Activated naive CD4-positive, alpha-beta T cell treated with anti-CD3 and anti-CD28 coated beads for 36 hours (primary cell): ENCODE measurements at regions of chr11 and their contacts with region 1.

Region 1: GRCh38 chr11:58524232-58525036 is 16.5 kb upstream of the OR5B21 start:
- DNase-seq: peak; percentile 67
- H3K4me3 Mint-ChIP-seq: peak overlapping the region; percentile 61
- H3K27ac Mint-ChIP-seq: peak overlapping the region; percentile 86
- H3K4me1 Mint-ChIP-seq: peaks cover 52% of the 10 kb centered on the region
- H3K27me3 Mint-ChIP-seq: no peaks in the 10 kb centered on the region

Region 2: GRCh38 chr11:57667736-57668435 is 856.5 kb before region 1 on chr11 and contains the start of gene ZDHHC5:
- CTCF ChIA-PET with region 1: interaction called, 4 read pairs
- intact Hi-C with region 1: loop called (anchors 1 kb)
- DNase-seq: peak; percentile 99
- H3K4me3 Mint-ChIP-seq: peak within 1 kb of the TSS; percentile 91
- H3K27ac Mint-ChIP-seq: peak within 1 kb of the TSS; percentile 97
- H3K4me1 Mint-ChIP-seq: peaks cover 43% of the 10 kb centered on the region
- H3K27me3 Mint-ChIP-seq: no peaks in the 10 kb centered on the region
- total RNA-seq, gene ZDHHC5: 38.5 to 46.6 TPM

Region 3: DNA sequence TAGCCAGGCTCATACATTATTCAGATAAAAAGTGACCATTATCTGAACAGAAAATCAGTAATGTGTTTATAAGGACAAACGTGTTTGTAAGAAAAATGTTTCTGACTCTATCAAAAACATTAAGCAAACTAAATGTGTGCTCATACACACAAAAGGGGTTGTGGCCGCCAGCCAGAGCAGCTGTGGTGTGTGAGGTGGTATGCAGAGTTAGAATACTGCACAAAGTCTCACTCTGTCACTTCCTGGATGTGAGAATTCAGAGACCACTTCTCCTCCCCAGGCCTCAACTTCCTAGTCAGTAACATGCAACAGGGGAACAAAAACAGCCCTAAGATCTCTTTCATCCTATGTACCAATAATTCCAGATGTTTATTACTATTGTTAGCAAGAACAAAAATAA is 26.0 kb before region 1 on chr11:
- CTCF ChIA-PET with region 1: interaction called, 9 read pairs
- intact Hi-C with region 1: loop called (anchors 2 kb)
- DNase-seq: peak; percentile 25
- H3K4me3 Mint-ChIP-seq: no peak overlapping the region
- H3K27ac Mint-ChIP-seq: no peak overlapping the region
- H3K4me1 Mint-ChIP-seq: peaks cover 22% of the 10 kb centered on the region
- H3K27me3 Mint-ChIP-seq: no peaks in the 10 kb centered on the region

Region 4: GRCh38 chr11:58592760-58593472 is 68.5 kb after region 1 on chr11:
- CTCF ChIA-PET with region 1: interaction called, 9 read pairs
- intact Hi-C with region 1: loop called (anchors 1 kb)
- DNase-seq: peak; percentile 71
- H3K4me3 Mint-ChIP-seq: no peak overlapping the region
- H3K27ac Mint-ChIP-seq: peak overlapping the region; percentile 67
- H3K4me1 Mint-ChIP-seq: peaks cover 73% of the 10 kb centered on the region
- H3K27me3 Mint-ChIP-seq: no peaks in the 10 kb centered on the region

Region 5: GRCh38 chr11:58640386-58641023 is 116.1 kb after region 1 on chr11:
- CTCF ChIA-PET with region 1: no interaction called
- intact Hi-C with region 1: no loop called
- DNase-seq: peak; percentile 10
- H3K4me3 Mint-ChIP-seq: no peak overlapping the region
- H3K27ac Mint-ChIP-seq: peak overlapping the region; percentile 20
- H3K4me1 Mint-ChIP-seq: peaks cover 20% of the 10 kb centered on the region
- H3K27me3 Mint-ChIP-seq: no peaks in the 10 kb centered on the region

Region 6: DNA sequence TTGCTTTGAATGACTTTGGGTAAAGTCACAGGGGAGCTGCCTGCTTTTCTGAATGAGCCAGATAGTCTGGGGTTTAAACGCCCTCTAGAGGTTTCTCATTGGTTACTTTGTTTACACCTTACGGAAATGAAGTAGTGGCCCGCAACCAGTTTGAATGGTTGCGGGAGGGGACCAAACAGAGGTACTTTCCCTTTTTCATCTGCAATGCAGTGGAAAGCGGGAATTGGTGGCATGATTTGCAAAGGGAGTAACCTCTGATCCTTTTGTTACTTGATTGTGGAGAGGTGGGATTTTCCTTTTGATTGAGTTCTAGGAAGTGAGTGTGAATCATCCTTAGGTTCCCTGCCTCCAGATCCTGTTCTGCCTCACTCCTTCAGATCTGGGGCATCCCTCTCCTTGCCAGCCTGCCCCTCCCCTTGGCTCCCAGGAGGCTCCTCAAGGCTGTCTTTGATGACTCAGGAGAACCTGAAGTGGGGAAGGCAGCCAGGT is 398.9 kb after region 1 on chr11:
- CTCF ChIA-PET with region 1: interaction called, 3 read pairs
- intact Hi-C with region 1: loop called (anchors 2 kb)
- DNase-seq: peak; percentile 61
- H3K4me3 Mint-ChIP-seq: no peak overlapping the region
- H3K27ac Mint-ChIP-seq: peak overlapping the region; percentile 11
- H3K4me1 Mint-ChIP-seq: peaks cover 25% of the 10 kb centered on the region
- H3K27me3 Mint-ChIP-seq: no peaks in the 10 kb centered on the region